Activated CD8-positive, alpha-beta memory T cell treated with anti-CD3 and anti-CD28 coated beads, Interleukin-2, amount 10 ng/mL, durations not matched to agents 7 days and 5 days (primary cell): ENCODE measurements at regions of chr3 and their contacts with region 1.

Region 1: DNA sequence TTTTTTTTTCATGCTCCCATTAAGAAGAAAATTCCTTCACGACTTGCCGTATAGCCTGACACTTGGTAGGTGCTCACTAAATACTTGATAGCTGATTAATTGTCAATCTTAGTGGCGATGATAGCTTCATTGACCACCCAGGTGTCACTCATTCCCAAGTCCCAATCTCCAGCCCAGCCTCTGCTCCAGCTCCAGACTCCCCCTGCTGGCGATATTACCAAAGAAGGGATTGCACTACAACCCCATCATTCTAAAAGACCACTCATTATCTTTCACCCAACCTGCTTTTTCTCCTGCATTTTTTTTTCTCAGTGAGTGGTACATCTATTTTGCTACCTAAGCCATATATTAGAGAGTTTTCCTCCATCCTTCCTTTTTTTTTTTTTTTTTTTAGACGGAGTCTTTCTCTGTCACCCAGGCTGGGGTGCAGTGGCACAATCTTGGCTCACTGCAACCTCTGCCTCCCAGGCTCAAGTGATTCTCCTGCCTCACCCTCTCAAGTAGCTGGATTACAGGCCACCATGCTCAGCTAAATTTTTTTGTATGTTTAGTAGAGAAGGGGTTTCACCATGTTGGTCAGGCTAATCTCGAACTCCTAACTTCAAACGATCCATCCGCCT is 19.5 kb upstream of the COMMD2 start:
- DNase-seq: peak; percentile 51
- ATAC-seq: no peak
- H3K4me3 Mint-ChIP-seq: no peak overlapping the region
- H3K27ac Mint-ChIP-seq: no peak overlapping the region
- H3K4me1 Mint-ChIP-seq: no peaks in the 10 kb centered on the region
- H3K27me3 Mint-ChIP-seq: peaks cover 21% of the 10 kb centered on the region

Region 2: GRCh38 chr3:149512209-149512782 is 259.5 kb before region 1 on chr3:
- CTCF ChIA-PET with region 1: interaction called, 11 read pairs
- DNase-seq: peak; percentile 66
- ATAC-seq: peak; percentile 59
- H3K4me3 Mint-ChIP-seq: no peak overlapping the region
- H3K27ac Mint-ChIP-seq: no peak overlapping the region
- H3K4me1 Mint-ChIP-seq: peaks cover 16% of the 10 kb centered on the region
- H3K27me3 Mint-ChIP-seq: peaks cover 2% of the 10 kb centered on the region

Region 3: DNA sequence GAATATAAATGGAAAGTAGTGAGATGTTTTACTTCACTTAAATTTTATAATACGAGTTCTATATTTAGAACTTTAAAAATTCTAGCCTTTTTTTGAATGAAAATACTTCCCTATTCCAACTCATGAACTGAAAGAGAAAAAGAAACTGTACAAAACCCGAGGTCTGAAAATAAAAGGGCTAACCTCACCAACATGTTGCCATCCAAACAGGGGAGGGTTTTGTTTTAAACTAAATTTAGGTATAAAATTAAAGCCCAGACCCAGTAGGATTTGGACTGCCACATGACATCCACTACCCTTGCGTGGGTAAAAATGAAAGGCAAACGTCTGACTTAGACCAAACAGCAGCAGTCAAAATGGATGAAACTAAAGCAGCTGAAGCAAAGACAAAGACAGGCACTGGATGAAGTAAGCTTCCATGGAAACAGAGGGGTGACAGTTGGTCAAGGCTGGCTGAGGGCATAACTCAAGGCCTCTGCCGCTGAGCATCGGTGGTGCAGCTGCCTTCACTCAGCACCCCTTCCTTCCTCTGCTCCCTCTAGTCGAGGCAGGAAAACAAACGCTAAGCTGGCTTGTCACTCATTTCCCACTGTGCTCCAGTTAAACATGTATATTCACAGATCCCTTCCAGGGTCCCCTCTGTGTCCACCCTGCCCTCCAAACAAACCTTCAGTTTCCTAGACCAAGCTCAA is 239.1 kb before region 1 on chr3:
- CTCF ChIA-PET with region 1: interaction called, 18 read pairs
- DNase-seq: no peak
- ATAC-seq: no peak
- H3K4me3 Mint-ChIP-seq: peak overlapping the region; percentile 3
- H3K27ac Mint-ChIP-seq: no peak overlapping the region
- H3K4me1 Mint-ChIP-seq: peaks cover 9% of the 10 kb centered on the region
- H3K27me3 Mint-ChIP-seq: peaks cover 3% of the 10 kb centered on the region

Region 4: GRCh38 chr3:149566292-149566975 is 205.3 kb before region 1 on chr3:
- CTCF ChIA-PET with region 1: interaction called, 30 read pairs
- DNase-seq: no peak
- ATAC-seq: no peak
- H3K4me3 Mint-ChIP-seq: no peak overlapping the region
- H3K27ac Mint-ChIP-seq: no peak overlapping the region
- H3K4me1 Mint-ChIP-seq: peaks cover 9% of the 10 kb centered on the region
- H3K27me3 Mint-ChIP-seq: peaks cover 5% of the 10 kb centered on the region

Region 5: GRCh38 chr3:149752051-149752787 is 19.5 kb before region 1 on chr3 and contains the start of gene COMMD2:
- CTCF ChIA-PET with region 1: interaction called, 11 read pairs
- DNase-seq: peak; percentile 91
- ATAC-seq: peak; percentile 98
- H3K4me3 Mint-ChIP-seq: peak within 1 kb of the TSS; percentile 96
- H3K27ac Mint-ChIP-seq: peak within 1 kb of the TSS; percentile 91
- H3K4me1 Mint-ChIP-seq: peaks cover 28% of the 10 kb centered on the region
- H3K27me3 Mint-ChIP-seq: no peaks in the 10 kb centered on the region
- total RNA-seq, gene COMMD2: 35.5 to 38.9 TPM

Region 6: DNA sequence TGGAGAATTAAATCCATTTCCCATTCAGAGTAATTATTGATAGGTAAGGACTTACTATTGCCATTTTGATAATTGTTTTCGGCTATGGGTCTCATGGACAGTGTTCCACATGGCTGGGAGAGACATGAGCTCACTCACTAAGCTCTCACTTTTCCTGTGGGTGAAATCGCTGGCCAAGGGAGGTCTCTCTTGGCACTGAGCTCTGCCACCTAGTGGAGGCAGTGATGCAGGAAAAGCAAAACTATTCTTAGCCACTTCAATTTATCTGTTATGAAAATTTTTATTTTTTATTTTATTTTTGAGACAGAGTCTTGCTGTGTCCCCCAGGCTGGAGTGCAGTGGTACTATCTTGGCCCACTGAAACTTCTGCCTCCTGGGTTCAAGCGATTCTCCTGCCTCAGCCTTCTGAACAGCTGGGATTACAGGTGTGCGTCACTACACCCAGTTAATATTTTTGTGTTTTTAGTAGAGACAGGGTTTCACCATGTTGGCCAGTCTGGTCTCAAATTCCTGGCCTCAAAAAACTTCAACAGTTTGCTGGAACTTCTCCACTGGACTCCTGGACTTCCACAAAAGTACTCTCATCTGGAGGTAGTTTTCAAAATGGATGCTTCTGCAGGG is 36.6 kb after region 1 on chr3:
- CTCF ChIA-PET with region 1: interaction called, 34 read pairs
- DNase-seq: peak; percentile 67
- ATAC-seq: no peak
- H3K4me3 Mint-ChIP-seq: no peak overlapping the region
- H3K27ac Mint-ChIP-seq: no peak overlapping the region
- H3K4me1 Mint-ChIP-seq: peaks cover 13% of the 10 kb centered on the region
- H3K27me3 Mint-ChIP-seq: peaks cover 24% of the 10 kb centered on the region

Region 7: DNA sequence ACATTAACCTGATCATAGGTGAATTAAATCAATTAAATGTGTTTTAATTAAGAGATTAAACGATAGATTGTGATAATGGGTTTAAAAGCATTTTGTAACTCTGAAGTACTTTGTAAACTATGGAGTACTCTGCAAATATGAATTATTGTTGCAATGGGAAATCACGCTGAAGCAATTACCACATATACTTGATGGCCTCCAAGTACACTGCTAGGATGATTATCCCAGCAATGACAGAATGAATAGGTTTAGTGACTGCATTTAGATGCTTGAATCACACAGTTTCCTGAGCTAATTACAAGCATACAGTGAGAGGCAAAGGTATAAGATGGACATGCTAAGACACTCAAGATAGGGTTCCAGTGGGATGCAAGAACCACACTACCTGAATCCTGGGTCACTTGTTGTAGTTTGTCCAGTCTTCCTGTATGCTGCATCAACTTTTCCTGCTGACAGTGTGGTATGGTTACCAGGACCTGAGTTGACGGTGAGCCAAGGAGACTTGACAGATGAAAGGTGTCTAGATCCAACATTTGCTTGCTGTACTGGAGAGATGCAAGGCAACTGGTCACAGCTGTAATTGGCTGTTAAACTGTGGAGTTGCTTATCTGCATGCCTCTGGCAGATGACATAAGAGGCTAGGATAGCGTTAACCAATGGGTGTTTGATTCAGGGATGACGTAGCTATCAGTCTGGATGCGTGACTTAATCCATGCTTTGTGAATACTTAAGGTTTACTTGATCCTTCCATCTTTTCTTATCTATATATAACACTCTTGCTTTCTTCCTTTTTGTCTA is 79.2 kb after region 1 on chr3:
- CTCF ChIA-PET with region 1: no interaction called
- DNase-seq: no peak
- ATAC-seq: no peak
- H3K4me3 Mint-ChIP-seq: no peak overlapping the region
- H3K27ac Mint-ChIP-seq: no peak overlapping the region
- H3K4me1 Mint-ChIP-seq: no peaks in the 10 kb centered on the region
- H3K27me3 Mint-ChIP-seq: no peaks in the 10 kb centered on the region